ENCODE measurements at regions of chr16 and their contacts with region 1.

Region 1: DNA sequence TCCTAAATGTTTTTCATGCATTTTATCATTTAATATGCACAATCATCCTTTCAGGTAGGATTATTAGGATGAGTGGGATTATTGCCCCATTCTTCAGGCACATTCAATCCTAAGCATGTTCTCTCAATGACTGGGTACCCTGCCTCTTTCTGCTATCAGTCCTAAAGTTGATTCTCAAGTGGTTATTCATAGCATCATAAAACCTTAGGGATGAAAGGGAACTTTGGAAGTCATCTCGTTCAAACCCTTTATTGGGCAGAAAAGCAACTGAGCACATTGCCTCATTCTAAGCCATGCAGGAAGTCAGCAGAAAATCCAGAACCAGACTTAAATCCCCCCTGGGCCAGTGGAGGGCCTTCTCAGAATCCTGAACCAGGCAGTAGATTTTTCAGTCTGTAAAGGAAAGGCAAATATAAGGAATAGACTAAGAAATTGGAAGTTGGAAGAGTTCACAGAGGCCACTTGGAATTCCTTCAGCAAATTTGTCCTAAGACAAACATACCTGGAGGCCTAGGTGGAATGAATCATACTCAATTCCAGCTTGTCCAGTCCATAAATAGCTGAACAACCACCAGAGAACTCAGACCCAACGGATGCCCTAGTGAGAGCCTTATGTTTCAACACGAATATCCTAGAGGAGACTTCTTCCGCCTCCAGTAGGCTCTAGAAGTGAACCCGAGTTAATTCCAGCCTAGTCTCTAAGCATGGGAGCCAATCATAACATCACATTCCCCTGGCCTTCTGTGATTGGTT is 62.7 kb downstream of the IRX6 start:
- DNase-seq: peak; percentile 69 to 73
- H3K4me3 ChIP-seq: no peak overlapping the region
- H3K4me3 Mint-ChIP-seq: no peak overlapping the region
- H3K27ac Mint-ChIP-seq: peak overlapping the region; percentile 67
- H3K4me1 ChIP-seq: peaks cover 40% of the 10 kb centered on the region
- H3K4me1 Mint-ChIP-seq: peaks cover 27% of the 10 kb centered on the region
- H3K27me3 ChIP-seq: no peaks in the 10 kb centered on the region
- H3K27me3 Mint-ChIP-seq: no peaks in the 10 kb centered on the region
- CTCF ChIP-seq: no peak

Region 2: GRCh38 chr16:55434000-55434399 is 47.3 kb after region 1 on chr16:
- CTCF ChIA-PET with region 1: no interaction called
- POLR2A ChIA-PET with region 1: no interaction called
- intact Hi-C with region 1: loop called (anchors 2 kb)
- DNase-seq: no peak
- H3K4me3 ChIP-seq: no peak overlapping the region
- H3K4me3 Mint-ChIP-seq: no peak overlapping the region
- H3K27ac Mint-ChIP-seq: peak overlapping the region; percentile 64
- H3K4me1 ChIP-seq: peaks cover 29% of the 10 kb centered on the region
- H3K4me1 Mint-ChIP-seq: peaks cover 33% of the 10 kb centered on the region
- H3K27me3 ChIP-seq: no peaks in the 10 kb centered on the region
- H3K27me3 Mint-ChIP-seq: no peaks in the 10 kb centered on the region
- CTCF ChIP-seq: no peak